ENCODE measurements at regions of chr11 and their contacts with region 1.

Region 1: DNA sequence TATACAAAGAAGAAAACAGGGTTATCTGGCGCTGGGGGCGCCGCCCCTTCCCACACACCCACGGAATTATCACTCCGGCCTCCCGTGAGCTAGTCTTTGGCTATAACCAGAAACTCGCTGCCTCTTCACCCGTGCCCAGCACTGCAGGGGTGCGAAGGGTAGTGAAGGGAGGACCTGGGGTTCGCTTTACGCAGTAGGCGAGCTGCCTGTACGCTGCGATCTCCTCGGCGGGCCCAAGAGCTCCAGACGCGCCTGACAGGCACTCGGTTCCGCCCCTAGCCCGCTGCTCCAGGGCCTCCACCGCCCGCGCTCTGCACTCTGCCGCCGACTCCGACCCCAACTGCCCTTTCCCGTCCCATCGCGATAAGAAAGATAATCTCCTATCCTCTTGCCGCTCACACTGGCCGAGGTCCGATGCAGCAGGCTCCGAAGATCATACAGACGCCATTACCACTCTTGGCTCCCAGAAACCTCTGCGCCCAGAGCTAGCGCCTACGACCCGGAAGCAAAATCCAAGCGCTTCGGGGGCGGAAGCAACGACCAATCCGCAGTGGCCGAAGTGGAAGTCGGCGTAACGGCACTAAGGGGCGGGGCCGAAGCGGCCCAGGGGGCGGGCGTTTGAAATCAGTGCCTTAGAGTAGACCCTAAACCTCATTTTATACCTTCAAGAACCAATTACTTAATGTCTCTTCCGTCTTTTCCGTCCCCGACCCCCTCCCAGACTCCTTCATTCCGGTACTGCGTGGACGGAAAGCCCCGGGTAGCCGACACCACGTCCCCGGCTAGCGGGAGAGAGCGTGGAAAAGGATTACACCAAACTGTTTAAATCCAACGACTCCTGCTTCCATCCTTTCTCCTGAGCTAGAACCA is at the starts of genes CWC15 and KDM4D:
- DNase-seq: peak; percentile 91 to 96 (median 94)
- H3K4me3 ChIP-seq: peak within 1 kb of the TSS; percentile 64 to 99 (median 88)
- H3K27ac ChIP-seq: peak within 1 kb of the TSS in 58 of 59 donors; percentile 12 to 93 (median 76)
- H3K27me3 ChIP-seq: no peaks in the 10 kb centered on the region
- CTCF ChIP-seq: peak in 42 of 56 donors; percentile 7 to 61 (median 31)
- total RNA-seq, gene CWC15: 45.0 to 75.4 (median 59.4) TPM
- total RNA-seq, gene KDM4D: 0.39 to 3.1 (median 1.4) TPM in 119 of 120 experiments, not detected in the other

Region 2: GRCh38 chr11:94623120-94623735 is 350.1 kb before region 1 on chr11:
- intact Hi-C with region 1: loop called in 1 of 2 experiments (anchors 5 kb)
- DNase-seq: peak in 2 of 10 donors; percentile 41 to 42
- H3K4me3 ChIP-seq: no peak overlapping the region
- H3K27ac ChIP-seq: no peak overlapping the region
- H3K27me3 ChIP-seq: no peaks in the 10 kb centered on the region
- CTCF ChIP-seq: peak; percentile 41 to 87 (median 70)

Region 3: GRCh38 chr11:95067039-95067840 is 93.9 kb after region 1 on chr11:
- intact Hi-C with region 1: loop called (anchors 2 to 5 kb)
- DNase-seq: peak; percentile 73 to 89 (median 82)
- H3K4me3 ChIP-seq: peak overlapping the region; percentile 68 to 96 (median 83)
- H3K27ac ChIP-seq: peak overlapping the region; percentile 88 to 99 (median 96)
- H3K27me3 ChIP-seq: no peaks in the 10 kb centered on the region
- CTCF ChIP-seq: peak in 52 of 56 donors; percentile 20 to 66 (median 49)

Region 4: GRCh38 chr11:95089620-95090542 is 116.5 kb after region 1 on chr11 and contains the start of gene ENDOD1:
- intact Hi-C with region 1: loop called in 1 of 2 experiments (anchors 10 kb)
- DNase-seq: peak; percentile 47 to 90 (median 79)
- H3K4me3 ChIP-seq: peak within 1 kb of the TSS; percentile 61 to 99 (median 91)
- H3K27ac ChIP-seq: peak within 1 kb of the TSS; percentile 92 to 100 (median 98)
- H3K27me3 ChIP-seq: no peaks in the 10 kb centered on the region
- CTCF ChIP-seq: peak in 36 of 56 donors; percentile 7 to 56 (median 26)
- total RNA-seq, gene ENDOD1: 49.1 to 144 (median 71.1) TPM

Region 5: GRCh38 chr11:95140397-95141033 is 167.2 kb after region 1 on chr11:
- intact Hi-C with region 1: loop called in 1 of 2 experiments (anchors 5 kb)
- DNase-seq: no peak
- H3K4me3 ChIP-seq: no peak overlapping the region
- H3K27ac ChIP-seq: peak overlapping the region in 11 of 59 donors; percentile 6 to 67 (median 21)
- H3K27me3 ChIP-seq: no peaks in the 10 kb centered on the region
- CTCF ChIP-seq: peak in 1 of 56 donors; percentile 7

Region 6: GRCh38 chr11:95764267-95764898 is 791.0 kb after region 1 on chr11:
- intact Hi-C with region 1: loop called in 1 of 2 experiments (anchors 10 kb)
- DNase-seq: no peak
- H3K4me3 ChIP-seq: peak overlapping the region in 2 of 59 donors; percentile 12 to 22
- H3K27ac ChIP-seq: no peak overlapping the region
- H3K27me3 ChIP-seq: no peaks in the 10 kb centered on the region
- CTCF ChIP-seq: peak; percentile 69 to 99 (median 85)

Measured in dorsolateral prefrontal cortex (tissue), 120 donors.